Activated CD4-positive, alpha-beta T cell treated with anti-CD3 and anti-CD28 coated beads, Interleukin-2, amount 10 ng/mL, durations not matched to agents 24 days and 14 days (primary cell): ENCODE measurements at regions of chr7 and their contacts with region 1.

Region 1: GRCh38 chr7:114865564-114865963 is 56.3 kb upstream of the MDFIC start:
- DNase-seq: peak; percentile 85
- H3K4me3 Mint-ChIP-seq: no peak overlapping the region
- H3K27ac Mint-ChIP-seq: no peak overlapping the region
- H3K4me1 Mint-ChIP-seq: peaks cover 11% of the 10 kb centered on the region
- H3K27me3 Mint-ChIP-seq: no peaks in the 10 kb centered on the region

Region 2: GRCh38 chr7:114843102-114843501 is 22.5 kb before region 1 on chr7:
- intact Hi-C with region 1: no loop called
- DNase-seq: no peak
- H3K4me3 Mint-ChIP-seq: no peak overlapping the region
- H3K27ac Mint-ChIP-seq: no peak overlapping the region
- H3K4me1 Mint-ChIP-seq: no peaks in the 10 kb centered on the region
- H3K27me3 Mint-ChIP-seq: peaks cover 2% of the 10 kb centered on the region

Region 3: GRCh38 chr7:114916261-114916892 is 50.8 kb after region 1 on chr7:
- intact Hi-C with region 1: loop called (anchors 2 kb)
- DNase-seq: peak; percentile 72
- H3K4me3 Mint-ChIP-seq: peak overlapping the region; percentile 62
- H3K27ac Mint-ChIP-seq: peak overlapping the region; percentile 99
- H3K4me1 Mint-ChIP-seq: peaks cover 49% of the 10 kb centered on the region
- H3K27me3 Mint-ChIP-seq: no peaks in the 10 kb centered on the region

Region 4: GRCh38 chr7:114953724-114954123 is 88.2 kb after region 1 on chr7:
- intact Hi-C with region 1: loop called (anchors 5 kb)
- DNase-seq: no peak
- H3K4me3 Mint-ChIP-seq: no peak overlapping the region
- H3K27ac Mint-ChIP-seq: no peak overlapping the region
- H3K4me1 Mint-ChIP-seq: peaks cover 38% of the 10 kb centered on the region
- H3K27me3 Mint-ChIP-seq: no peaks in the 10 kb centered on the region

Region 5: DNA sequence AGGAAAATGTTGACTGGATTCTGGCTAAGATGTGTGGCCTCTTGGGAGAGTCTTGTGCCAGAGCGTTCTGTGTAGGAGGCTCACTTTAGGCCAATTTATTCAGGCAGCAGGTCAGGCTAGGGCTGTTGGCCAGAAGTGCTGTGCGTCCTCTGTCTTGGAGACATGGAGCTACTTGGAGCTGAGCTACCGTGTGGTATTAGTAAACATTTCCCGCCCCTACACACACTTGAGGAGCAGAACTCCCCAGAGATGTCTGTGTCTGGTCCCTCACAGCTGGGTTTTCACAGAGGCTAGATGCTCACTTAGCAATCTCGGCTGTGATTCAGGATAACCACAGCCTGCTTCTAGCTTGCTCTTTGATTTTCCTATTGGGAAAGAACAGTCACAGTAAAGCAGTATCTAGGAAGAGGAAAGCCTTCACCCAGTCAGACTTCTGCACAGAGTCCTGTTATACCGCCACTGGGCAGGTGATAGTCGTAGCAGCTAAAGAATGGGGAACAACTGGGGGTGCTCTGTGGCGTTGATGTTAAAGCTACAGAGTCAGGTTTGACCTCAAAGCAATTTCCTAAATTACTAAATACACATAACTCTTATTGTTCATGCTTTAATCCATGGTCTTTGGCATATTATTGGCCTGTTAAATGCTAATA is 143.0 kb after region 1 on chr7:
- intact Hi-C with region 1: loop called (anchors 5 kb)
- DNase-seq: peak; percentile 72
- H3K4me3 Mint-ChIP-seq: peak overlapping the region; percentile 73
- H3K27ac Mint-ChIP-seq: peak overlapping the region; percentile 86
- H3K4me1 Mint-ChIP-seq: peaks cover 73% of the 10 kb centered on the region
- H3K27me3 Mint-ChIP-seq: no peaks in the 10 kb centered on the region

Region 6: GRCh38 chr7:115116773-115117715 is 251.5 kb after region 1 on chr7:
- intact Hi-C with region 1: loop called (anchors 10 kb)
- DNase-seq: no peak
- H3K4me3 Mint-ChIP-seq: no peak overlapping the region
- H3K27ac Mint-ChIP-seq: no peak overlapping the region
- H3K4me1 Mint-ChIP-seq: no peaks in the 10 kb centered on the region
- H3K27me3 Mint-ChIP-seq: peaks cover 10% of the 10 kb centered on the region

Region 7: GRCh38 chr7:115217373-115217772 is 351.8 kb after region 1 on chr7:
- intact Hi-C with region 1: loop called (anchors 1 kb)
- DNase-seq: no peak
- H3K4me3 Mint-ChIP-seq: no peak overlapping the region
- H3K27ac Mint-ChIP-seq: no peak overlapping the region
- H3K4me1 Mint-ChIP-seq: peaks cover 9% of the 10 kb centered on the region
- H3K27me3 Mint-ChIP-seq: peaks cover 9% of the 10 kb centered on the region

Region 8: DNA sequence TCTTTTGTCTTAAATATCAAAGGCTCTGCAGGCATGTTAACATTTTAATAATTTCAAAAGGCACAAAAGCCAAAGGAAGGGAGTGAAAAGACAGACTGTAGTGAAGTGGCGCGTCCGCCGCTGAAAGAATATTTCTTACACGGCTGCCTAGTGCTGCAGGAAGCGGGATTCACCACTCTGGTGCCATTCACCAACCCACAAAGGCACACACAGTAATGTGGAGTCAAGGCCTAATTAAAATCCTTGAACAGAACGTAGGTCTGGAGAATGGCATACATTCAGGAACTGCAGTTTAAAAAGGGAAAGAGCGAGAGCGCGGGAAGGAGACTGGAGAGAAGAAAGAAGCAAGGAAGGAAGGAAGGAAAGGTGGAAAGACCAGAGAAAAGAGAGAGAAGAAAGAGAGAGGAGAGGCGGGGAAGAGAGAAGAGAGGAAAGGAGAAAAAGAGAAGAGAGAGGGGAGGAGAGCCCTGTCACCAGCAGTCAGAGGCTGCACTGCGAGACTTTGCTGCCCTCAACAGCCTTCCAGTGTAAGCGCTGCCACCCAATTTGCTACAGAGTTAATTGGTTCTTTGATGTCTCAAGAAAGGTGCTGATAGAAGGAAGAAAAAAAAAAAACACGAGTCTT is 610.3 kb after region 1 on chr7:
- intact Hi-C with region 1: loop called (anchors 10 kb)
- DNase-seq: no peak
- H3K4me3 Mint-ChIP-seq: no peak overlapping the region
- H3K27ac Mint-ChIP-seq: no peak overlapping the region
- H3K4me1 Mint-ChIP-seq: peaks cover 6% of the 10 kb centered on the region
- H3K27me3 Mint-ChIP-seq: peaks cover 36% of the 10 kb centered on the region